ENCODE measurements at regions of chr9 and their contacts with region 1.

Region 1: GRCh38 chr9:109463924-109464625 is 34.0 kb downstream of the PTPN3 start:
- DNase-seq: peak; percentile 72
- H3K4me3 Mint-ChIP-seq: peak overlapping the region; percentile 36
- H3K27ac Mint-ChIP-seq: peak overlapping the region; percentile 87
- H3K4me1 Mint-ChIP-seq: peaks cover 46% of the 10 kb centered on the region
- H3K27me3 Mint-ChIP-seq: no peaks in the 10 kb centered on the region
- CTCF ChIP-seq: no peak

Region 2: DNA sequence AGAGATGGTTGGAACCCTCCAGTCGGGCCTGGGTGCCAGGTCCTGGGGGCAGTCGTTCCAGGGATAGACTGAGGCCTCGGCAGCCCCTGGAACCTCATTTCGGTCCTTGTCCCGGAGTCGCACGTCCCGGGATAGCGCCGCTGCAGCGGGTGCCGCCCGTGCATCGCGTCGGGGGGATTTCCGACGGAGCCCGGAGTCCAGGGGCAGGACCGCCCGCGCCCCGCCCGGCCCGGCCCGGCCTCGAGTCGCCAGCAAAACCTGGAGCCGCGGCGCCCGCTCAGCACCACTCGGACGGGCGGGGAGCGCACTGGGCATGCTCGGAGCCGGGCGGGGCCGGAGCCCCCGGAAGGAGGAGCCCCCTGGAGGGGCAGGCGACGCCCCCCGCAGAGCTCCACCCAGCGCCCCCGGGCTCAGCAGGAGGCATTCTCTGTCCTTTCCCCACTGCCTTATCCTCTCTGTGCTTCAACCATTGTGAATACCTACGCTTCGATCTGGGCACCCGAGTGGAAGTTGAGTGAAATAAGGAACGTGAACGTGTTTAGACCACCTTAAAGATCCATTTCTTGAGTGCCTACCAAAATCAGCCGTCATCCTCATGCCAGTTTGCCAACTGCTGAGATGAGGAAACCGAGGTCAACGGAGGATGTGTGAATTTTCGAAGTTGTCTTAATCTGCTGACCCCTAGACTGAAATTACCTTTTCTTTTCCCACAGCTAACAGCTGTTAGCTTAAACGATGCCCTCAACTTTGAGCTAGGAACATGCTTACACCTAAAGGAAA is 35.7 kb after region 1 on chr9:
- CTCF ChIA-PET with region 1: interaction called, 9 read pairs
- POLR2A ChIA-PET with region 1: interaction called, 10 read pairs
- intact Hi-C with region 1: no loop called
- DNase-seq: no peak
- H3K4me3 Mint-ChIP-seq: peak overlapping the region; percentile 69
- H3K27ac Mint-ChIP-seq: no peak overlapping the region
- H3K4me1 Mint-ChIP-seq: peaks cover 8% of the 10 kb centered on the region
- H3K27me3 Mint-ChIP-seq: peaks cover 27% of the 10 kb centered on the region
- CTCF ChIP-seq: no peak